AG04449 (cell line): ENCODE measurements at regions of chr11 and their contacts with region 1.

Region 1: DNA sequence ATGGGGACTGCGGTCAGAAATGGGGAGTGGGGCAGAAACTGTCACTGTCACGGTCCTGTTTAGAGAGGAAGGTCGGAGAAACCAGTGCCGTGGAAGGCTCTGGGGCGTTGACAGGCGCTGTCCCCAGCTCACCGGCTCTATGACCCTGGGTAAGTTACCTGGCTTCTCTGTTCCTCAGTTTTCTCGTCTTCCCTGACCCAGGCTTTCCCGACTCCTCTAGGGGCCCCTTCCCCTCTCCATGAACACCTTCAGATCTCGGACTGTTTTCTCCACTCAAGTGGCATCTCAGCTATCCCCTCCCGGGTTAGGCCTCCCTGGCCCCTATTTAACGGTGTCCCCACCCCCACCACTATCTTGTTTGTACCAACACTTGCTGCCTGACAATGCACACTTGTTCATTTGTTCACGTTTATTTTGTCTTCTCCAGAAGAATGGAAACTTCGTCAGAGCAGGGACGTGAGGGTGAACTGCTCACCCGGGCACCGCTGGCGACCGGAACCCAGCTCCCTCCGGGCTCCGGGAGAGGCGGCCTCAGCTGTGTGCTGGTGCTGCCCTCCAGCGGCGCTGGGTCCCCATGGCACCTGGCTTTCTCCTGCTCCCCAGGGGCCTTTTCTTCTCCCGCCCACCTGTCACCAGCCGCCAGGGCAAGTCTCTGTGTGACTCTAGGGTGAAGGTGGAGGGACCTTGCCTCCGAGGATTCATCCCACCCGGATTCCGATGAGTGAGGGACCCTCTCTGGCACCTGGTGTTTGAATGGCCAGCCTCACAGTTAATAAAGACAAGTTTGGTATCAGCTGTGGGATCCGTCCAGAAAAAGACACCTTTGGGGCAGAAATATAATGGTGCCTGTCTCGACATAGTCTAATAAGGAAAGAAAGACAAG is 33.1 kb upstream of the SLC35C1 start:
- DNase-seq: no peak
- H3K4me3 ChIP-seq: peak overlapping the region; percentile 62
- CTCF ChIP-seq: peak; percentile 97

Region 2: DNA sequence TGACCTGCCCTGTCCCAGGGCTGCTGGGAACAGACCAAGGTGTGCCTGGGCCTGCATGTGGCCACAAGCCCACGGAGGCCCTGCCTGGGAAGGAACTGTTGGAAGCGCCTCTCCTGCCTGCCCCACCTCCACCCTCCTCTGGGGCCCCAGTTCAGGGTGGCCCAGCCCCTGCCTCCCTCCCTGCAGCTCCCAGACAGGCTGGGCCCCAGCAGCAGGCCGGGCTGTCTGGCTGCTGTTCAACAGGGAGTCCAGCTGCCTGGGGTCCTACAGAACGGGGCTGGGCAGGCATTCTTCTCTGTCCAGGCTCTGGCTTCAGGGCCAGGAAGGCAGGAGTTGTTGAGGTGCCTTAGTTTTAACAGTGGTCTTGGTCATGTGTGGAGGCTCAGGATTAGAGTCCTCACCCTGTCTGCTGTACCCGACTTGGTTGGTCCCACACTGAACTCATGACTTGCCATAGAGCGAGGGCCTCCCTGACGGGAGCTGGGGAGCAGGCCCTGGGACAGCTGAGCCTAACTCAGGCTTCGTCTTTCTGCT is 613.5 kb before region 1 on chr11:
- CTCF ChIA-PET with region 1: no interaction called
- POLR2A ChIA-PET with region 1: no interaction called
- DNase-seq: no peak
- H3K4me3 ChIP-seq: no peak overlapping the region
- CTCF ChIP-seq: no peak

Region 3: GRCh38 chr11:45332276-45332934 is 439.4 kb before region 1 on chr11:
- CTCF ChIA-PET with region 1: interaction called, 22 read pairs
- POLR2A ChIA-PET with region 1: no interaction called
- DNase-seq: no peak
- H3K4me3 ChIP-seq: no peak overlapping the region
- CTCF ChIP-seq: peak; percentile 59

Region 4: DNA sequence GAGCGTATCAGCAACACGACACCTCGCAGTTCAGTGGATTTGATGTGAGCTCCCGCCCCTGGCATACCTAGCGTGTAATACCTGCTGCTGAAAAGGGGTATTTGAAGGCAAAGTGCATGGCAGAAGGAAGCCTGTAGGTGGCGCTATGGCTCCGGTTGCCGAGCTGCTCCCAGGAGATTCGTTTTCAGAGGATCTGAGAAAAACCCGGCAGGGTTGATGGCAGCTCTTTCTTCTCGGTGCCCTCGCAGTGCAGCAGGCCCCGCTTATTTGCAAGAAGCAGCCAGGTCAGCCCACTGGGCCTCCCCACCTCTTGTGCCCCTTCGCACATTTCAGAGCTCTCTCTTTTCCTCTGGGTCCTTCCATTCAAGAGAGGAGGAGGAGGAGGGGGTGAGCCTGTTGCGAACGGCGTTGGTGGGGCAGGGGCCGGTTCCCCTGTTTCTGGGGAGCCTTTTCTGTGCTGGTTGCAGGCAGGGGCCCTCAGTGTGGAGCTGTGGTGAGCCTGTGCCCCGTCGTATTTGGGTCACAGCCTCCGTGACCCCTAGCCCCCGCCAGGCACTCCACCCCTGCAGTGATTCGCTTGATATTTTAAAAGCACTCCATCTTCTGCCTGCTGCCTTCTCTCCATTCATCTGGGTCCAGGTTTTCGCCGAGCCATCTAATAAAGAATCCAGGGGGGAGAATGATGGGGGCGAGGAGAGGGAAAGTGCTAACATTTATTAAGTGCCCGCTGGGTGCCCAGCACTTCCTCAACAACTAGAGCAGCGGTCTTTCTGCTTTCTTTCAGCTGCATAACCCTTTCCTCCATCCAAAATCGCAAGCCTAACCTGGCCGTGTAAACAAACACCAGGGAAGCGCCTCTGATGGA is 400.3 kb before region 1 on chr11:
- CTCF ChIA-PET with region 1: interaction called, 252 read pairs
- POLR2A ChIA-PET with region 1: no interaction called
- DNase-seq: no peak
- H3K4me3 ChIP-seq: no peak overlapping the region
- CTCF ChIP-seq: peak; percentile 93

Region 5: GRCh38 chr11:45754261-45754709 is 17.5 kb before region 1 on chr11:
- CTCF ChIA-PET with region 1: interaction called, 31 read pairs
- POLR2A ChIA-PET with region 1: no interaction called
- DNase-seq: no peak
- H3K4me3 ChIP-seq: no peak overlapping the region
- CTCF ChIP-seq: no peak

Region 6: DNA sequence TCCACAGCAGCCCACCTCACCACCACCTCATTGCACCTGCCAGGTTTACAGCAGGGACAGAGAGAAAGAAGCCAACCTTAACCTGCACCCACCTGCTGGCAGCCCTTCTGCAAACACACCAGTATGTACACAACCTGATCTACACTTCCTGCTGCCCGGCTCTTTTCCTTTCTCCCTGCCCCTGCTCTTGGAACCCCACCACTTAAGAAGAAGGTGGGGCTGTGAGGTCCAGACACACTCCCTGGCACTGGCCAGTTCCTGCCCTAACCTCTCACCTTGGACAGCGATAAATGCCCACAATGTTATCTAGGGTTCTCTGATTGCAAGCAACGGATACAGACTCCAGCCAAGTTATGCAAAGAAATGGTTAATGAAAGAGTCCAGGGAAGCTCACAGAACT is 22.4 kb after region 1 on chr11:
- CTCF ChIA-PET with region 1: interaction called, 46 read pairs
- POLR2A ChIA-PET with region 1: no interaction called
- DNase-seq: no peak
- H3K4me3 ChIP-seq: no peak overlapping the region
- CTCF ChIP-seq: no peak